Right ventricle myocardium superior (tissue), 1 donor: ENCODE measurements at regions of chr22 and their contacts with region 1.

Region 1: DNA sequence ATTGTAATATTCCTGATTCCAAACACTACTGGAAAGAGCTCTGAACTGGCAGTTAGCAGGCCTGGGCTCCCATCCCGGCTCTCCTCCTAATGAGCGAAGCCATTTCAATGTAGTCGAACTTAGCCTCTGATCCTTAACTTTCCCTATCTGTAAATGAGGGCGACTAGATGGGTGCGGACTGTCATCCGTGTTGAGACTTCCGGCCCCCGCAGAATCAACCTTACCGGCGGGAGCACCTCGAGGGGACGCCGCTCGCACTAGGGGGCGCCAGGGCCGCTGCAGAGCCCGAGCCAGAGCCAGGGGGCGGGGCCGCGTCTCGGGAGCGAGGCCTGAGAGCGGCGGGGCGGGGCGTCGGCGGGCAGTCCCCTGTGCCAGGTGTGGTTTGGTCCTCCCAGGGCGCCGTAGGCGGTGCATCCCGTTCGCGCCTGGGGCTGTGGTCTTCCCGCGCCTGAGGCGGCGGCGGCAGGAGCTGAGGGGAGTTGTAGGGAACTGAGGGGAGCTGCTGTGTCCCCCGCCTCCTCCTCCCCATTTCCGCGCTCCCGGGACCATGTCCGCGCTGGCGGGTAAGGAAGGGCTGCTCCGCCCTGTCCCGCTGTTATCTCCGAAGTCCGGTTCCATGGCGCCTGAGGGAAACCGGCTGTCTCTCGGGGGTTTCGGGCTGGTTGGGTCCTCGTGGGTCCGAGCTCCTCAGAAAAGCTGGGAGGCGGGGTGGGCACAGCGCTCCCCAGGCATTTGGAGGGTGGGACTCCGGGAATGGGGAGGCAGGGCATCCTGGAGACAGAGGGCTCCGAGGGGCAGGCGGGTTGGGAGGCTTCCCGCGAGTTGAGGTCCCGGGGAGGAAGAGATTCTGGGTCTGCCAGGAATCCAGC is at the start of gene LIMK2:
- DNase-seq: peak; percentile 98
- ATAC-seq: peak; percentile 96
- total RNA-seq, gene LIMK2: 8.5 TPM

Region 2: DNA sequence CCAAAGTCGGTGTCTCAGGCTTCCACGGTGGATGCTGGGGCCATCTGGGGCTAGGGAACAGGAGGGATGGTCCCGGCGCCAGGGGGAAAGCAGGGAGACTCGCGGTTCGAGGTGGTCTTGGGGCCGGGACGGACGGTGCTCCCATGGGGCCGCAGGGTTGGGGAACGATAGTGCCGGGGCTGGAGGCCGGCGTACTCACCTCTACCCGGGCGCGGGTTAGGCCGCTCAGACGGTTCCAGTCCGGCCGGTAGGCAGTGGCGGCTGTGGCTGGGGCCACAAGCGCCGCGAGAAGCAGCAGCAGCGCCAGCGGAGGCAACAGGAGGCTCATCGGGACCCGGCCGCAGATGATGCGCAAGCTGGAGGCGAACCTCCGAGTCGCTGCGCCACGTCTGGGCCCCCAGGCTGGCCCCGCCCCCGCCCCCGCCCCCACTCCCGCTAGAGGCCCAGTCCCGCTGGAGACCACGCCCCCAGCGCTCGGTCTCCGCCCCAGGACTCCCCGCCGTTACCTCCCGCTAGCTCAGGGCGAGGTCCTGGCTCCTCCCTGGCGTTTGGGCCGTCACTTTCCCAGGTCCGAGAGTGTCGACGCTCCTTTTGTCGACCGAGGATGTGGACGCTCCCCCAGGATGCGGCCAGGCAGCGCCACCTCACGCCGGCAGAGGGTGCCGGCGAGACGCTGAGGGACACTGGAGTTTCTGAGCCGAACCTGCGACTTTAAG is 104.8 kb before region 1 on chr22 and contains the start of gene SELENOM:
- intact Hi-C with region 1: loop called (anchors 10 kb)
- DNase-seq: peak; percentile 98
- ATAC-seq: peak; percentile 90
- total RNA-seq, gene SELENOM: 43.4 TPM

Region 3: GRCh38 chr22:31170971-31171370 is 41.1 kb before region 1 on chr22:
- intact Hi-C with region 1: no loop called
- DNase-seq: no peak
- ATAC-seq: no peak

Region 4: GRCh38 chr22:31272522-31273446 is 60.7 kb after region 1 on chr22:
- intact Hi-C with region 1: loop called (anchors 5 kb)
- DNase-seq: no peak
- ATAC-seq: peak; percentile 77